T-cell (primary cell): ENCODE measurements at regions of chr19 and their contacts with region 1.

Region 1: DNA sequence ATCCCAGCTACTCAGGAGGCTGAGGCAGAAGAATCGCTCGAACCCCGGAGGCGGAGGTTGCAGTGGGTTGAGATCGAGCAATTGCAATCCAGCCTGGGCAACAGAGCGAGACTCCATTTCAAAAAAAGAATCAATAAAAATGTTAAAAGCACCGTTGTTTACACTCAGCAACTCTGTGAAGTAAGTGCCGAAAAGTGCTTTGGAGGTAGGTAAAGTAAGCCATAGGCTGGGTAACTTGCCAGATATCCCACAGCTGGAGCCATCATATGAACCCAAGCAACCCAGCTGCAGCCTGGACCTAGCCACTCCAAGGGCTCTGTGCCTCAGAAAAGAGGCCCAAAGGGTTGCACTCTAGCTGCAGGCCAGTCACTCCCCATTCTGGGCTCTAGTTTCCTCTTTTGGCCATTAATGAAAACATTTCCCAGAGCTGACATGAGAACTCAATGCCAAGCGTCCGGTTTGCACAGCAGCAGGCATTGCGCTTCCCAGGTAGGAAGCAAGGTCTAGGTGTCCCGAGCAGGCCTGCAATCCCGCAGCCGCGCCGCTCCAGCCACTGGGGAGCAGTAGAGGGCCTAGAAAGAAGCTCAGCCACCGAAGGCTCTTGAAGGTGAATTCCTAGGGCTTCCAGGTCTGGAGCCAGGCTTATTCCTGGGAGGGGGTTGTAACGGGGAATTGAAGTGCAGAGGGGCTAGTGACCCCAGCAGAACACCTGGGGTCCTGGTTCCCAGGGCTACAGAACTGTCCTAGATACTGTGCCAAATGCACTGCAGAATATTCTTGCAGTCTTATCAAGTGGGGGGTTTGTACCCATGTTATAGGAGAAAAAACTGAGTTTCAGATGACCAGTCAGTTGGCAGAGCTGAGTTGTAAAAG is 4.1 kb upstream of the CD79A start:
- DNase-seq: peak in 33 of 35 experiments; percentile 36 to 79 (median 60)
- ATAC-seq: no peak
- H3K4me3 ChIP-seq: no peak overlapping the region
- H3K4me3 Mint-ChIP-seq: peak overlapping the region in 2 of 3 donors; percentile 31 to 88
- H3K27ac ChIP-seq: peak overlapping the region; percentile 81
- H3K27ac Mint-ChIP-seq: peak overlapping the region; percentile 86 to 99
- H3K4me1 ChIP-seq: peaks cover 80 to 100% of the 10 kb centered on the region in 2 experiments
- H3K4me1 Mint-ChIP-seq: peaks cover 65 to 90% (median 85%) of the 10 kb centered on the region in 3 donors
- H3K27me3 ChIP-seq: no peaks in the 10 kb centered on the region
- H3K27me3 Mint-ChIP-seq: no peaks in the 10 kb centered on the region

Region 2: GRCh38 chr19:41859618-41860418 is 13.2 kb before region 1 on chr19 and contains the start of gene RPS19:
- CTCF ChIA-PET with region 1: interaction called in 1 of 2 experiments, 15 read pairs
- POLR2A ChIA-PET with region 1: interaction called, 5 to 9 read pairs
- DNase-seq: peak; percentile 93 to 99 (median 97)
- ATAC-seq: peak; percentile 86 to 90 (median 88)
- H3K4me3 ChIP-seq: peak within 1 kb of the TSS; percentile 83 to 96
- H3K4me3 Mint-ChIP-seq: peak within 1 kb of the TSS; percentile 80 to 95 (median 93)
- H3K27ac ChIP-seq: peak within 1 kb of the TSS; percentile 88
- H3K27ac Mint-ChIP-seq: peak within 1 kb of the TSS; percentile 96 to 99
- H3K4me1 ChIP-seq: peaks cover 27 to 48% of the 10 kb centered on the region in 2 experiments
- H3K4me1 Mint-ChIP-seq: peaks cover 41 to 48% (median 45%) of the 10 kb centered on the region in 3 donors
- H3K27me3 ChIP-seq: no peaks in the 10 kb centered on the region
- H3K27me3 Mint-ChIP-seq: no peaks in the 10 kb centered on the region
- total RNA-seq, gene RPS19: 3,043 to 4,286 (median 3,822) TPM

Region 3: DNA sequence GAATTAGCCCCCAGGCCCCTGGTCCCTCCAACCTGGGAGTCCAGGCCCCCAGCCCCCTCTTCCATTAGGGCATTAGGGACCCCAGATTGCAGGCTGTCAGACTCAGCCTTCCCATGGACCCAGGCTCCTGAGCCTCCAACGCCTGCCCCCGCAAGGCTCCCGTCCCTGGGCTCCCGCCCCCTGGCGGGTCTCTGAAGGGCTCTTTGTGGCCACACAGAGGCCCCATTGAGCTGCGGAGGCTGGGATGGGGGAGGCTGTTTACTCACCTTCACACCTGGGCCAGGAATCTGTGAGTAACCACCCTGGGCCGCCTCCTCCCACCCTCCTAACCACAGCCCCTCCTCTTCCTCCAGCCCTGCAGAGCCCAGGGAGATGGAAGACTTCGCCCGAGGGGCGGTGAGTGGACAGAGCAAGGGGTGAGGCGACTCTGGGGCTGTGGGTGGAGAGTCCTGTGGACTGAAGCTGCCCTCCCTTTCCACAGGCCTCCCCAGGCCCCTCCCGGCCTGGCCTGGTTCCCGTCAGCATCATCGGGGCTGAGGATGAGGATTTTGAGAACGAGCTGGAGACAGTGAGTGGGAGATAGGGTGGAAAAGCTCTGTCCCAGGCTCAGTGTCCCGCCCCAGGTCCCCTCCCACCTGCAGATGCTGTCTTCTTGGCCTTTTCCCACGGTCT is 14.8 kb after region 1 on chr19:
- CTCF ChIA-PET with region 1: interaction called, 3 to 37 read pairs
- POLR2A ChIA-PET with region 1: interaction called, 8 to 12 read pairs
- DNase-seq: peak; percentile 67 to 91 (median 81)
- ATAC-seq: peak; percentile 58 to 62 (median 60)
- H3K4me3 ChIP-seq: peak overlapping the region; percentile 78 to 99
- H3K4me3 Mint-ChIP-seq: peak overlapping the region; percentile 88 to 98 (median 95)
- H3K27ac ChIP-seq: peak overlapping the region; percentile 90
- H3K27ac Mint-ChIP-seq: peak overlapping the region; percentile 97 to 98
- H3K4me1 ChIP-seq: peaks cover 29 to 84% of the 10 kb centered on the region in 2 experiments
- H3K4me1 Mint-ChIP-seq: peaks cover 58 to 72% (median 62%) of the 10 kb centered on the region in 3 donors
- H3K27me3 ChIP-seq: no peaks in the 10 kb centered on the region
- H3K27me3 Mint-ChIP-seq: no peaks in the 10 kb centered on the region

Region 4: DNA sequence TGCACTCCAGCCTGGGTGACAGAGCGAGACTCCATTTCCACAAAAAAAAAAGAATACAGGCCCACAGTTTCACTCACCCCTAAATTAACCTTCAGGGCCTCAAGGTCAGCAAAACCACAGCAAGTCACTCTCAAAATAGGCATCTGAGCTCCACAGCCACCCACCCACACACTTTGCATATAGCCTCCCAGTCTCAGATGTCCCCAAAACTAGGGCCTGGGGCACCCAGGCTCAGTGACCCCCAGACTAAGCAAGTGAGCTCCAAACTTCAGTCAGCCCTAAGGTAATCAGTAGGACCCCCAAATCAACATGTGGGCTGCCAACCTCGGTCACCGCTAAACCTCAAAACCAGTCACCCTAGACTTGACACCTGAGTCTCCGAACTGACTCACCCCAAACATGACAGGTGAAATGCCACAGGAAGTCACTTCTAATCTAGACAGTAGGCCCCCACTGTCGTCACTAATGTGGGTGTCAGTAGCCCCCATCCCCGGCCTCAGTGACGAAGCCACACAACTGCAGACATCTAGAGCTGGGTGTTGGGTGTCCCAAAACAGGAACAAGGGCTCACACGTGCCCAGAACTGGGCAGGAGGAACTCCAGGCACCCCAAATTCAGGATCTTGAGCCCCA is 72.2 kb after region 1 on chr19:
- CTCF ChIA-PET with region 1: interaction called, 7 to 15 read pairs
- POLR2A ChIA-PET with region 1: interaction called in 1 of 2 experiments, 9 read pairs
- DNase-seq: peak; percentile 59 to 94 (median 90)
- ATAC-seq: peak; percentile 88 to 95 (median 90)
- H3K4me3 ChIP-seq: no peak overlapping the region
- H3K4me3 Mint-ChIP-seq: peak overlapping the region; percentile 44 to 65 (median 60)
- H3K27ac ChIP-seq: peak overlapping the region; percentile 76
- H3K27ac Mint-ChIP-seq: peak overlapping the region; percentile 97
- H3K4me1 ChIP-seq: peaks cover 8 to 51% of the 10 kb centered on the region in 2 experiments
- H3K4me1 Mint-ChIP-seq: peaks cover 41 to 63% (median 57%) of the 10 kb centered on the region in 3 donors
- H3K27me3 ChIP-seq: peaks cover 0 to 10% of the 10 kb centered on the region in 2 experiments
- H3K27me3 Mint-ChIP-seq: peaks cover 0 to 5% of the 10 kb centered on the region in 2 donors